ENCODE measurements at regions of chr1 and their contacts with region 1.

Region 1: DNA sequence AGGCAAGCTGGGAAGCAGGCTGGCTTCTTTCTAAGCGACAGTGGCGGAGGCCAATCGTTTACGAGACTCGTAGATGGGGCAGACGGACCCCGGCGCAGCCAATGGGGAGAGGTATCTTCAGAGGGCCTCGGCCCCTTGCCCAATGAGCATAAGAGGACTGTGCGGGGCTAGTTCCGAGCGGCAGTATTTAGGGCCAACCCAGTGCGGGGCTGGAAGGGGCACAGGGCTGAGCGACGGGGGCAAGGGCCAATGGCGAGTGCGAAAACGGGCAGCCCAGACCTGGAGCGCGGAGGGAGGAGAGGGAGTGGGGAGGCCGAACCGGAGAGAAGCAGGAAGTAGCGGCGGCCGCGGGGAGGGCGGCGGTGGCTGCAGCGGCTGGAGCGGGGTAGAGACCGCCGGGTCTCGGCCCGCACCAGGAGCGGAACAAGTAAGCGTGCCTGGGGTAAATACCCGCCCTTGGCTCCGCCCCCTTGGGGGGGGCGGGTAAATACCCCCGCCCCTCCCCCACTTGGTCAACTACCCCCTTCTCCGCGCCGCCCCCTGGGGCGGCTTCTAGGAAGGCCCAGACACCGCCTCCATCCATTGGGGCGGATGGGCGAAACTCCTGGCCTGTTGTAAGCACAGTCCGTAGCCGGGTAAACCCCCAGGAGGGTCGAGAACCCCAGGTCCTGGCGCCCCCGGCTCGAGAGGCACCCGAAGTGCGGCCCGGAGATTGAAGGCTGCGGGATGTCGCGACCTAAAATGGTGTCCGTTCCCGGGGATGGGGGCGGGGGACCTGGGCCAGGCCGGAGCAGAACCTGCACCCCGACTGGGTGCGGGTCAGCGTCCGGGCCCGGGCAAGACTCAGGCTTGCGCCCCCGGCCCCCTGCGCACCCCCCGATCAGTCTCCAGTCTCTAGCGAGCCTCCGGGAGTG is at the start of gene ZNF687:
- DNase-seq: peak; percentile 100
- H3K4me3 ChIP-seq: peak within 1 kb of the TSS; percentile 74
- H3K4me3 Mint-ChIP-seq: peak within 1 kb of the TSS; percentile 88
- H3K27ac Mint-ChIP-seq: peak within 1 kb of the TSS; percentile 97
- H3K4me1 ChIP-seq: 0 out of 2 replicates have a peak, but pooled peaks cover 4% of the 10 kb centered on the region
- H3K4me1 Mint-ChIP-seq: peaks cover 6% of the 10 kb centered on the region
- H3K27me3 ChIP-seq: no peaks in the 10 kb centered on the region
- H3K27me3 Mint-ChIP-seq: no peaks in the 10 kb centered on the region
- CTCF ChIP-seq: no peak
- total RNA-seq, gene ZNF687: 23.9 and 30.2 TPM in 2 replicates

Region 2: DNA sequence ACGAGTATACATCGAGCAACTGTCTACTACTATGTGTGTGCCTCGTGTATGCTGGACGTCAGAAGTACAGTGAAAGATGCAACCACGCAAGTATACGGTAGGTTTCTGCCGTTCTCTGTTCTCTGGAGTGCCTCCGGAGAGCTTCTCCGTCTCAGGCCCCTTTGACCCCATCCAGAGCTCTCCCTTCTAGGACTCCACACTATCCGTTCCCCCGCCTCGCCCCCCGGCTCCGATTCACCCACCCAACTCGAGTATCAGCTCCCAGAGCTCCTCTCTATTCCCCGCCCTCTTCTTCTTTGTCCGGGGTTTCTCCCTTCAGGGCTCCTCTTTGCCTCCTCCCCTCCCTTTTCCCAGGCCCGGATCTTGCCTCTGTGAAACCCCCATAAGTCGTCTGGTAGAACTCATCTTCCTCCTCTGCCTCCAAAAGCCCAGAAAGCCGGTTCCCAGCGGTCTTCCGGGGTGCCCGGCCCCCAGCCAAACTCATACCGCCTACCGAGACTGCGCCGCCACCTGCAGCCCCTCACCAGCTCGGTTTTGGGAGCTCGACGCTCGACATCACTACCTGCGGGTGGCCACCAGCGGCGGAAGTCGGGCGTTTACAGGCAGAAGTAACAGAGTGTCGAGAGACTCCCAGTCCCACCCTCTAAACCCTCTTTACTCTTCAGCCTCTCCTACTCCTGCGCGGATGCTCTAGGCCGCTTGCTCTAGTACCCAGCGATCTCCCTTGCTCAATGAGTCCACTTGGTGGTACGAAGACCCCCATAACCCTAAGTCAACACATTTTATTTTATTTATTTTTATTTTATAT is 92.4 kb before region 1 on chr1 and contains the start of gene VPS72:
- CTCF ChIA-PET with region 1: interaction called, 4 read pairs
- POLR2A ChIA-PET with region 1: interaction called, 13 read pairs
- intact Hi-C with region 1: no loop called
- DNase-seq: peak; percentile 89 to 92
- H3K4me3 ChIP-seq: peak within 1 kb of the TSS; percentile 48
- H3K4me3 Mint-ChIP-seq: peak within 1 kb of the TSS; percentile 85
- H3K27ac Mint-ChIP-seq: peak within 1 kb of the TSS; percentile 91
- H3K4me1 ChIP-seq: 0 out of 2 replicates have a peak, but pooled peaks cover 9% of the 10 kb centered on the region
- H3K4me1 Mint-ChIP-seq: peaks cover 8% of the 10 kb centered on the region
- H3K27me3 ChIP-seq: no peaks in the 10 kb centered on the region
- H3K27me3 Mint-ChIP-seq: no peaks in the 10 kb centered on the region
- CTCF ChIP-seq: peak; percentile 0 to 16
- total RNA-seq, gene VPS72: 80.1 and 86.0 TPM in 2 replicates

Region 3: DNA sequence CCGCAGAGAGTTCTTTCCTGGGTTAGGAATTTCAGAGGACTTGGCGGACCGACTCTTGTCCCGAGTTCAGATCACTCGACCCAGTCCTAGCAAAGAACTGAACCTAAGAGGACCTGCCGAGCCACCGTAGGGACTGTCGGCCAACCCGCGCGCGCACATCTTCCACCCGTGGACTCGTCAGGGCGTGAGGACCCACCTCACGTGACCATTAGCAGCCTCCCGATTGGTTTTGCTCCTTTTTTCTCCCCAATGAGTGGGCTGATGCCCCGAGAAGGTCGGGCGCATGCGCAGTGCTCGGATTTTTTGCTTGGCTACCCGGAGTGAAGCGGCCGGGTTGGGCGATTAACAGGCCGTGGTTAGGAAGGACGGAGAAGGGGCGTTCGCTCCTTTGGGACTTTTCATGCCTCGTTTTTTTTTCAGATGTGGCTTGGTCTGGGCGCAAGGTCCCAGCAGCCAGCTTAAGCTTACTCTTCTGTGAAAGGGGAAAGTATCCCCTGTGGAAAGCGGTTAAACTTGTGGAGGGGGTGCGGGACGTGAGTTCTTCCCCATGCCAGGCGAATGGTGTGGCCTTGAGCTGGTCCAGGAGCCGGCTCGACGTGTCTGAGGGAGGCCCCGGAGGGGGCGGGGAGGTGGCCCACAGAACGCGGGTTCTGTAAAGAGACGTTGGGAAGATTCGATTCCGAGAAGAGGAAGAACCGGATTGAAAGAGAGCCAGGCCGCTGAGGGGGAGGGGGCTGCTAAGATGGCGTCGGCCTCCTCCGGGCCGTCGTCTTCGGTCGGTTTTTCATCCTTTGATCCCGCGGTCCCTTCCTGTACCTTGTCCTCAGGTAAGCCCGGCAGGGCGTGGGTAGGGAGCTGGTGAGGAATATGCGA is 83.7 kb before region 1 on chr1 and contains the start of gene PIP5K1A:
- CTCF ChIA-PET with region 1: interaction called, 8 read pairs
- POLR2A ChIA-PET with region 1: interaction called, 12 read pairs
- intact Hi-C with region 1: loop called (anchors 1 kb)
- DNase-seq: peak; percentile 97 to 98
- H3K4me3 ChIP-seq: peak within 1 kb of the TSS; percentile 60
- H3K4me3 Mint-ChIP-seq: peak within 1 kb of the TSS; percentile 89
- H3K27ac Mint-ChIP-seq: peak within 1 kb of the TSS; percentile 92
- H3K4me1 ChIP-seq: peaks cover 4% of the 10 kb centered on the region; the same call in 1 of the 2 replicates
- H3K4me1 Mint-ChIP-seq: peaks cover 13% of the 10 kb centered on the region
- H3K27me3 ChIP-seq: no peaks in the 10 kb centered on the region
- H3K27me3 Mint-ChIP-seq: no peaks in the 10 kb centered on the region
- CTCF ChIP-seq: no peak
- total RNA-seq, gene PIP5K1A: 88.6 and 95.1 TPM in 2 replicates

Region 4: GRCh38 chr1:151243683-151244216 is 38.5 kb before region 1 on chr1:
- CTCF ChIA-PET with region 1: no interaction called
- POLR2A ChIA-PET with region 1: no interaction called
- intact Hi-C with region 1: no loop called
- DNase-seq: no peak
- H3K4me3 ChIP-seq: no peak overlapping the region
- H3K4me3 Mint-ChIP-seq: no peak overlapping the region
- H3K27ac Mint-ChIP-seq: peak overlapping the region; percentile 42
- H3K4me1 ChIP-seq: no peaks in the 10 kb centered on the region
- H3K4me1 Mint-ChIP-seq: peaks cover 8% of the 10 kb centered on the region
- H3K27me3 ChIP-seq: no peaks in the 10 kb centered on the region
- H3K27me3 Mint-ChIP-seq: no peaks in the 10 kb centered on the region
- CTCF ChIP-seq: no peak

Region 5: DNA sequence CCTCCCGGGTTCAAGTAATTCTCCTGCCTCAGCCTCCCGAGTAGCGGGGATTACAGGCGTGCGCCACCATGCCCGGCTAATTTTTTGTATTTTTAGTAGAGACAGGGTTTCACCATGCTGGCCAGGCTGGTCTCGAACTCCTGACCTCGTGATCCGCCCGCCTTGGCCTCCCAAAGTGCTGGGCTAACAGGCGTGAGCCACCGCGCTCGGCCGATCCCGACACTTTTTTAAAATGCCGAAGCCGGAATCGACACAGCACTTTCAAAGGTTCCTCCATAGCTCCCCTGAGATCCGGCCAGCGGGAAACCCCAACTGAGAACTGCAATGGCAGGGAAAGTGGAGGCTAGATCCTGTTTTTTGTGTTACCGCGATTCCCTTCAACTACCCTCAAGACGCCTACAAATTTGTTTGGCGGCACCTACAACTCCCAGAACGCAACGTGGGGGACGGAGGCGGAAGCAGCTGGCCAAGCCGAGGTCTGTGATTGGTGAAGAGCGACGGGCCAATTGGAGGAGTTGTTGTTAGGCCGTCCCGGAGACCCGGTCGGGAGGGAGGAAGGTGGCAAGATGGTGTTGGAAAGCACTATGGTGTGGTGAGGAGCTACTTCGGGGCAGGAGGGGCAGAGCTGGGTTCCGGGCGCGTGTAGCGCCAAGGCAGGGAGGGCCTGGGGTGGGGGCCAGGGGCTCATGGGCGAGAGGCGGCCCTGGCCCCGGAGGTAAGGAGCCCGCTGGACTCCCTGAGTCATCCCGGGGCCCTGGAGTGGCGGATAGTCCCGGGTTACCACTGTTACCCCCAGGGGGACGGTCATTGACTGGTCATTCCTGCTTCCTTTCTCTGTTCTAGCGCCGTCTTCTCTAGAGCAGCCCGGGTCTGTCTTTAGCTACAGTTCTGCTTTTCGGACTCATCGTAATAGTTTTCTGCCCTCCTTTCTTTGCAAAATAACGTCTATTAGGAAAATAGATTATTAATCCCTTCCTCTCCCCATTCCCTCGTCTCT is 27.7 kb before region 1 on chr1 and contains the start of gene PSMD4:
- CTCF ChIA-PET with region 1: interaction called, 7 read pairs
- POLR2A ChIA-PET with region 1: interaction called, 19 read pairs
- intact Hi-C with region 1: loop called (anchors 1 kb)
- DNase-seq: peak; percentile 96 to 97
- H3K4me3 ChIP-seq: peak within 1 kb of the TSS; percentile 76
- H3K4me3 Mint-ChIP-seq: peak within 1 kb of the TSS; percentile 91
- H3K27ac Mint-ChIP-seq: peak within 1 kb of the TSS; percentile 98
- H3K4me1 ChIP-seq: peaks cover 4% of the 10 kb centered on the region; the same call in 1 of the 2 replicates
- H3K4me1 Mint-ChIP-seq: peaks cover 10% of the 10 kb centered on the region
- H3K27me3 ChIP-seq: no peaks in the 10 kb centered on the region
- H3K27me3 Mint-ChIP-seq: peaks cover 3% of the 10 kb centered on the region
- CTCF ChIP-seq: no peak
- total RNA-seq, gene PSMD4: 250 and 253 TPM in 2 replicates

Region 6: GRCh38 chr1:151327223-151327902 is 45.1 kb after region 1 on chr1 and contains the start of gene PI4KB:
- CTCF ChIA-PET with region 1: interaction called, 4 read pairs
- POLR2A ChIA-PET with region 1: interaction called, 17 read pairs
- intact Hi-C with region 1: loop called (anchors 1 kb)
- DNase-seq: peak; percentile 97 to 98
- H3K4me3 ChIP-seq: peak within 1 kb of the TSS; percentile 75
- H3K4me3 Mint-ChIP-seq: peak within 1 kb of the TSS; percentile 98
- H3K27ac Mint-ChIP-seq: peak within 1 kb of the TSS; percentile 95
- H3K4me1 ChIP-seq: peaks cover 11% of the 10 kb centered on the region
- H3K4me1 Mint-ChIP-seq: peaks cover 25% of the 10 kb centered on the region
- H3K27me3 ChIP-seq: no peaks in the 10 kb centered on the region
- H3K27me3 Mint-ChIP-seq: no peaks in the 10 kb centered on the region
- CTCF ChIP-seq: no peak
- total RNA-seq, gene PI4KB: 49.7 and 52.7 TPM in 2 replicates

Region 7: DNA sequence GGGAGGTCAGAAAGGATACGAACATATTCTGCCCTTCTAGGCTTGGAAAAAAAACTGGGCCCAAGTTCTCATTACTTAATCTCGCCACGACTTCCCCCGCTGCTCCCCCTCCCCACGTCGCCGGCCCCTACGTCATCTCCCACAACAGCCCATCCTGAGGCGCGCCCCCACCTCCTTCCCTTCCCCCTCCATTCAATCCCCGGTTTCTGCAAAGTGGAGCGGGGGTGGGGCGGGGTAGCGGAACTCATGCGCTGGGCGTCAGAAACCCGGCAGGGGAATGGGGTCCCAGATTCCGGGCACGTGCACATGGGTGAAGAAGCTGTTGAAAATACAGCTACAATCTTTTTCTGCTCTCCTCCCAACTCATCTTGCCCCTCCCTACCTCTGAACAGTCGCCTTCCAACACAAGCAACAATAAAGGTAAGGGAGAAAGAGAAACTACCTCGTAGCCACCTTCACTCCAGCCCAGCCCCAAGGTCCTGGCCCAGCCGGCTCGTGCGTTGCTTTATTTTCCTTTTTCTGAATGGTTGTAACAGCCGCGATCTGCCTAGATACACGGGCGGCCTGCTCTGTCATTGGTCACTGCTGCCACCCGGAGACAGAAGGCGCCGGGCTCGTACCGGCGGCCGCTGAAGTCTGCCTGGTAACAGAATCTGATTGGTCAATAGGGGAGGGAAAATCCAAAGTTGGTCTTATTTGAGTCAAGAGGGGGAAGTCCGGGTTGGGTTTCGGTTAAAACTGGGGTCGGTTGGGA is 64.7 kb after region 1 on chr1 and contains the start of gene RFX5:
- CTCF ChIA-PET with region 1: no interaction called
- POLR2A ChIA-PET with region 1: interaction called, 3 read pairs
- intact Hi-C with region 1: loop called (anchors 5 kb)
- DNase-seq: peak; percentile 94 to 96
- H3K4me3 ChIP-seq: peak within 1 kb of the TSS; percentile 45
- H3K4me3 Mint-ChIP-seq: peak within 1 kb of the TSS; percentile 93
- H3K27ac Mint-ChIP-seq: peak within 1 kb of the TSS; percentile 95
- H3K4me1 ChIP-seq: peaks cover 6% of the 10 kb centered on the region; the same call in 1 of the 2 replicates
- H3K4me1 Mint-ChIP-seq: peaks cover 18% of the 10 kb centered on the region
- H3K27me3 ChIP-seq: no peaks in the 10 kb centered on the region
- H3K27me3 Mint-ChIP-seq: no peaks in the 10 kb centered on the region
- CTCF ChIP-seq: no peak
- total RNA-seq, gene RFX5: 23.3 and 25.0 TPM in 2 replicates

Region 8: DNA sequence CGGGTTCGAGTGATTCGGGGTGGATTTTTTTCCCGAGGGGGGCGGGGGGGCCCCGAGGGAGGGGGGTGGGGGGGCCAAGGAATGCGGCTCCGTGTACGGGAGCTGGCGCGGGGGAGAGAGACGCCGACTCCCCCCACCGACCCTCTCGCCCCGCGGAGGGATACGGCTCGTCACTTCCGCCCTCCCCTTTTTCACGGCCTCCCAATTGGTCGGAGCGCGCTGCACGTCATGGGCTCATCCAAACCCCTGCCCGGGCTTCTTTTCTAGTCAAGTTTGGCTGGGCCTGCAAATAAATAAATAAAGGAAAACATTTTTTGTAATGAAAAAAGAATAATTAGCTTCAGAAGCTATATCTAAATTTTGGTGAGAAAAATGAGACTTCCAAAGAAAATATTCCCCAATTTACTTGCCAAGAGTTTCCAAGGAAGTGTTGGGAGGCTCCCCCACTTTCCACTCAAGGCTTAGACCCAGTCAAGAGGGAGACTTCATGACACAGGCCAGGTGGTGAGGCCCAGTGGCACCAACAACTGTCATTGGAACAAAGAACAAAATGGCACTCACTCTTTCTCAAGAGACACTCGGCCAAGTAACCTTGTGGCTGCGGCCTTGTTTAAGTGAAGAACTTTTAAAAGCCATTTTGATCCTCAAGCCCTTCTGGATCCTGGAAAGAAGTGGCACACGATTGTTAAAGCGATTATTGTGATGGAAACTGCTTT is 177.3 kb after region 1 on chr1 and contains the start of gene POGZ:
- CTCF ChIA-PET with region 1: no interaction called
- POLR2A ChIA-PET with region 1: no interaction called
- intact Hi-C with region 1: no loop called
- DNase-seq: peak; percentile 95 to 97
- H3K4me3 ChIP-seq: peak within 1 kb of the TSS; percentile 77
- H3K4me3 Mint-ChIP-seq: peak within 1 kb of the TSS; percentile 80
- H3K27ac Mint-ChIP-seq: peak within 1 kb of the TSS; percentile 83
- H3K4me1 ChIP-seq: peaks cover 17% of the 10 kb centered on the region
- H3K4me1 Mint-ChIP-seq: peaks cover 7% of the 10 kb centered on the region
- H3K27me3 ChIP-seq: no peaks in the 10 kb centered on the region
- H3K27me3 Mint-ChIP-seq: no peaks in the 10 kb centered on the region
- CTCF ChIP-seq: no peak
- total RNA-seq, gene POGZ: 80.0 and 83.0 TPM in 2 replicates

Measured in Caco-2 (cell line).